Gastrocnemius medialis (tissue), 4 donors: ENCODE measurements at regions of chr1 and their contacts with region 1.

Region 1: DNA sequence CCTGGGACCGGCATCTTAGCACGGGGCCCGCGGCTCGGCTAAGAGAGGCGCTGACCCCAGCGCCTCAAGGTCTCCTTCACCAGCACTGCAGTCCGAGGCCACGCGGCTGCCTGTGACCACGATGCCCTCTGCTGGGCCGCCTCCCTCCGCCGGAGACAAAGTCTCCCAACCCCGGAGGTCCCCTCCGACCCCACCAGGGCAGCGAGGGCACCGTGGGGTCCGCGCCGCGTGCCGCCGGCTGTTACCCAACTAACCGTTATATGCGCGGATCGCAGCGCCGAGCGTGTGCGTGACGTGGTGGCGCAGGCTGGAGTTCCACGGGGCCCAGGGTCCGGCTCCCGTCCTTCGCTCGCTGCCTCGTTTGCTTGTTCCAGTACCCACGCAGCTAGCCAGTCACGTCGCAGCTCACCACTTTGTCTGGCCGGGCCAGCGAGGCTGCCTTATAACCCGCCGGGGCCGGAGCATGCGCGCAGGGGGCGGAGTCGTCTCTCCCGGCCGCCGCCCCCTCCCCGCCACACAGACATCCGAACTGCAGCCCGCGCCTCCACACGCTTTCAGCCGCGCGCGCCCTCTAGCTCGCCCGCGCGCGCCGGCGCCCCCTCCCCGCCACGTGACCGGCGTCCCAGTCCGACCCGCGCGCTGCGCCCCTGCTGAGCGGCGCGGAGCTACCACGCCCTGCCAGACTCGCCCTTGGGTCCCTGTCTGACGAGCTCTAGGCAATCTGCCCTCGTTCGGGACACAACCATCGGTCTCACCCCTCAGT is at the start of gene SLC16A1:
- DNase-seq: peak; percentile 93
- ATAC-seq: peak; percentile 71 to 75
- H3K4me3 ChIP-seq: peak within 1 kb of the TSS; percentile 74 to 96 (median 80)
- H3K27ac ChIP-seq: peak within 1 kb of the TSS; percentile 93 to 100 (median 96)
- H3K4me1 ChIP-seq: peaks cover 43 to 50% of the 10 kb centered on the region in 2 donors
- H3K27me3 ChIP-seq: no peaks in the 10 kb centered on the region
- CTCF ChIP-seq: peak in 3 of 5 experiments; percentile 29 to 43 (median 34)
- POLR2A ChIP-seq: peak; percentile 94 to 99
- total RNA-seq, gene SLC16A1: 26.5 to 41.6 (median 36.2) TPM

Region 2: DNA sequence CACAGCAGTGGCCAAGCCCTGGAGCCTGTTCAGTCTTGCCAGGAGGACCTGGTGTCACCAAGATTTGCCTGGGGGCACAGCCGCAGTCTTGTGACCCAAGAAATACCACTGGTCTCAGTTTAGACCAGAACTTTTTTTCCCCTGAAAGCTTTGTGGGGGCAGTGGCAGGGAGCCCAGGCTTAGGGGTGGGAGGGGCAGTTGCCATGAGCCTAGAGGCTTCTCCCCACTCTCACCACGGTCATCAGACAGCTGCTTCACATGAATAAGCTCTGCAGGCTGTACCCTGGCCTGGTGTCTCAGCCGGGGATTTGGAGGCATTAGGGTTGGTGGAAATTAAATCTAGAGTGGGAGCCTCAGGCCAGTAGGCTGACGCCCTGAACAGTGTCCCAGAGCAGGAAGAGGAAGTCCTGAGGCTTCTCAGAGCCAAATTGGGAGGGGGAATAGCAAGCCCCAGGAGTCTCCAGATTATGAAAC is 73.7 kb before region 1 on chr1:
- in situ Hi-C with region 1: no loop called
- intact Hi-C with region 1: loop called (anchors 5 kb)
- DNase-seq: peak in 1 of 2 donors; percentile 18
- ATAC-seq: no peak
- H3K4me3 ChIP-seq: no peak overlapping the region
- H3K27ac ChIP-seq: no peak overlapping the region
- H3K4me1 ChIP-seq: no peaks in the 10 kb centered on the region
- H3K27me3 ChIP-seq: no peaks in the 10 kb centered on the region
- CTCF ChIP-seq: no peak
- POLR2A ChIP-seq: no peak

Region 3: DNA sequence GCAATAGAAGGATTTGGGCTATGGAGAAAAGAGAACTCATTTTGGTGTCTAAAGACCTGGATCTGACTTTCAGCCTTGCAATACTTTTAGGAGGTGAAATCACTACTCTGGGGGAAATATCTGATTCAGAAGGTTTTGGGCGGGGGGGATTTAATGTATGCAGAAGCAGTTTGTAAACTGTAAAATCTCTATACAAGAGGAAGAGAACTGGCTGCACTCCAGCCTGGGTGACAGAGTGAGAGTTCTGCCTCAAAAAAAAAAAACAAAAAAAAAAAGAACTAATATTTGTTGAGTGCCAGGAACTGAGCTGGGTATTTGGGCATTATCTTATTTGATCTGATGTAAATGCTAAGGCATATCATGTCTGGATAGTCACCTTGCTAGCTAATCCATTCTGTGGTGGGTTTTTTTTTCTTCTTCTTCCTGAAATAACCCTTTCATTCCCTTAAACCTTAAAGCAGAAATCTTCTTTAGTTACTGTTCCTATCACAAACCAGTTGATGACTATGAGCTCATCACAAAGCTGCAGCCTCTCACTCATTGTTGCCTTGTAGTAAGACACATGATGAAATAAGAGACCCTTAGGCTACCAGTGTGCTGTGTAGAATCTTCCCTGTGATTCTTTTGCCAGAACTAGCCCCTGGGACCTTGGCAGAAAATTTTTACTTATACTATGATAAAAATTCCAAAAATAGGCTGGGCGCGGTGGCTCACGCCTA is 35.6 kb after region 1 on chr1:
- in situ Hi-C with region 1: loop called in 1 of 4 experiments (anchors 5 kb)
- intact Hi-C with region 1: loop called (anchors 1 kb)
- DNase-seq: no peak
- ATAC-seq: no peak
- H3K4me3 ChIP-seq: no peak overlapping the region
- H3K27ac ChIP-seq: peak overlapping the region; percentile 91 to 94 (median 94)
- H3K4me1 ChIP-seq: peaks cover 45 to 72% of the 10 kb centered on the region in 2 donors
- H3K27me3 ChIP-seq: no peaks in the 10 kb centered on the region
- CTCF ChIP-seq: no peak
- POLR2A ChIP-seq: no peak

Region 4: GRCh38 chr1:113042285-113043143 is 86.6 kb after region 1 on chr1:
- in situ Hi-C with region 1: no loop called
- intact Hi-C with region 1: loop called (anchors 1 kb)
- DNase-seq: peak; percentile 42 to 66
- ATAC-seq: peak; percentile 90 to 92
- H3K4me3 ChIP-seq: no peak overlapping the region
- H3K27ac ChIP-seq: no peak overlapping the region
- H3K4me1 ChIP-seq: peaks cover 0 to 7% of the 10 kb centered on the region in 2 donors
- H3K27me3 ChIP-seq: no peaks in the 10 kb centered on the region
- CTCF ChIP-seq: peak; percentile 67 to 78 (median 73)
- POLR2A ChIP-seq: no peak

Region 5: GRCh38 chr1:114757455-114758250 is 1801.7 kb after region 1 on chr1 and contains the start of gene CSDE1:
- in situ Hi-C with region 1: no loop called
- intact Hi-C with region 1: loop called (anchors 10 kb)
- DNase-seq: peak; percentile 98
- ATAC-seq: peak; percentile 83 to 86
- H3K4me3 ChIP-seq: peak within 1 kb of the TSS; percentile 83 to 98 (median 90)
- H3K27ac ChIP-seq: peak within 1 kb of the TSS; percentile 97 to 100 (median 98)
- H3K4me1 ChIP-seq: peaks cover 33 to 38% of the 10 kb centered on the region in 2 donors
- H3K27me3 ChIP-seq: no peaks in the 10 kb centered on the region
- CTCF ChIP-seq: peak; percentile 17 to 66 (median 61)
- POLR2A ChIP-seq: peak; percentile 95 to 96
- total RNA-seq, gene CSDE1: 2,331 to 4,024 (median 3,697) TPM